ENCODE measurements at regions of chr12 and their contacts with region 1.

Region 1: GRCh38 chr12:122974274-122974891 is 661 bp upstream of the OGFOD2 start:
- DNase-seq: peak; percentile 97 to 99 (median 98)
- H3K4me3 ChIP-seq: peak overlapping the region; percentile 100
- H3K4me3 Mint-ChIP-seq: peak overlapping the region; percentile 95 to 99 (median 98)
- H3K27ac ChIP-seq: peak overlapping the region; percentile 98
- H3K27ac Mint-ChIP-seq: peak overlapping the region; percentile 99 to 100 (median 99)
- H3K4me1 ChIP-seq: peaks cover 27% of the 10 kb centered on the region
- H3K4me1 Mint-ChIP-seq: peaks cover 26 to 50% (median 29%) of the 10 kb centered on the region in 3 donors
- H3K27me3 ChIP-seq: no peaks in the 10 kb centered on the region
- H3K27me3 Mint-ChIP-seq: no peaks in the 10 kb centered on the region

Region 2: GRCh38 chr12:122825773-122826724 is 148.3 kb before region 1 on chr12:
- CTCF ChIA-PET with region 1: no interaction called
- POLR2A ChIA-PET with region 1: interaction called, 12 read pairs
- DNase-seq: no peak
- H3K4me3 ChIP-seq: no peak overlapping the region
- H3K4me3 Mint-ChIP-seq: peak overlapping the region in 5 of 7 donors; percentile 29 to 77 (median 41)
- H3K27ac ChIP-seq: no peak overlapping the region
- H3K27ac Mint-ChIP-seq: no peak overlapping the region
- H3K4me1 ChIP-seq: no peaks in the 10 kb centered on the region
- H3K4me1 Mint-ChIP-seq: peaks cover 0 to 8% (median 6%) of the 10 kb centered on the region in 3 donors
- H3K27me3 ChIP-seq: no peaks in the 10 kb centered on the region
- H3K27me3 Mint-ChIP-seq: peaks cover 0 to 12% of the 10 kb centered on the region in 2 donors

Region 3: GRCh38 chr12:122958198-122958888 is 16.0 kb before region 1 on chr12:
- CTCF ChIA-PET with region 1: no interaction called
- POLR2A ChIA-PET with region 1: no interaction called
- DNase-seq: no peak
- H3K4me3 ChIP-seq: no peak overlapping the region
- H3K4me3 Mint-ChIP-seq: no peak overlapping the region
- H3K27ac ChIP-seq: no peak overlapping the region
- H3K27ac Mint-ChIP-seq: no peak overlapping the region
- H3K4me1 ChIP-seq: no peaks in the 10 kb centered on the region
- H3K4me1 Mint-ChIP-seq: no peaks in the 10 kb centered on the region
- H3K27me3 ChIP-seq: no peaks in the 10 kb centered on the region
- H3K27me3 Mint-ChIP-seq: no peaks in the 10 kb centered on the region

Region 4: GRCh38 chr12:123019841-123020138 is 45.4 kb after region 1 on chr12:
- CTCF ChIA-PET with region 1: no interaction called
- POLR2A ChIA-PET with region 1: no interaction called
- DNase-seq: peak in 1 of 5 donors; percentile 3
- H3K4me3 ChIP-seq: no peak overlapping the region
- H3K4me3 Mint-ChIP-seq: no peak overlapping the region
- H3K27ac ChIP-seq: no peak overlapping the region
- H3K27ac Mint-ChIP-seq: peak overlapping the region in 4 of 8 donors; percentile 32 to 57 (median 42)
- H3K4me1 ChIP-seq: peaks cover 4% of the 10 kb centered on the region
- H3K4me1 Mint-ChIP-seq: peaks cover 3 to 10% (median 5%) of the 10 kb centered on the region in 3 donors
- H3K27me3 ChIP-seq: no peaks in the 10 kb centered on the region
- H3K27me3 Mint-ChIP-seq: no peaks in the 10 kb centered on the region

Measured in CD8-positive, alpha-beta memory T cell (primary cell).